Heart right ventricle (tissue), 16 donors: ENCODE measurements at regions of chr3 and their contacts with region 1.

Region 1: GRCh38 chr3:72996473-72997333 is at the start of gene PPP4R2:
- DNase-seq: peak; percentile 88 to 91
- ATAC-seq: peak; percentile 96 to 98 (median 97)
- H3K4me3 ChIP-seq: peak within 1 kb of the TSS; percentile 85 to 97 (median 92)
- H3K27ac ChIP-seq: peak within 1 kb of the TSS; percentile 96 to 99 (median 98)
- H3K4me1 ChIP-seq: peaks cover 0 to 48% (median 41%) of the 10 kb centered on the region in 9 donors
- H3K27me3 ChIP-seq: no peaks in the 10 kb centered on the region
- CTCF ChIP-seq: peak in 2 of 9 donors; percentile 11 to 32
- total RNA-seq, gene PPP4R2: 43.1 to 75.4 (median 50.6) TPM

Region 2: DNA sequence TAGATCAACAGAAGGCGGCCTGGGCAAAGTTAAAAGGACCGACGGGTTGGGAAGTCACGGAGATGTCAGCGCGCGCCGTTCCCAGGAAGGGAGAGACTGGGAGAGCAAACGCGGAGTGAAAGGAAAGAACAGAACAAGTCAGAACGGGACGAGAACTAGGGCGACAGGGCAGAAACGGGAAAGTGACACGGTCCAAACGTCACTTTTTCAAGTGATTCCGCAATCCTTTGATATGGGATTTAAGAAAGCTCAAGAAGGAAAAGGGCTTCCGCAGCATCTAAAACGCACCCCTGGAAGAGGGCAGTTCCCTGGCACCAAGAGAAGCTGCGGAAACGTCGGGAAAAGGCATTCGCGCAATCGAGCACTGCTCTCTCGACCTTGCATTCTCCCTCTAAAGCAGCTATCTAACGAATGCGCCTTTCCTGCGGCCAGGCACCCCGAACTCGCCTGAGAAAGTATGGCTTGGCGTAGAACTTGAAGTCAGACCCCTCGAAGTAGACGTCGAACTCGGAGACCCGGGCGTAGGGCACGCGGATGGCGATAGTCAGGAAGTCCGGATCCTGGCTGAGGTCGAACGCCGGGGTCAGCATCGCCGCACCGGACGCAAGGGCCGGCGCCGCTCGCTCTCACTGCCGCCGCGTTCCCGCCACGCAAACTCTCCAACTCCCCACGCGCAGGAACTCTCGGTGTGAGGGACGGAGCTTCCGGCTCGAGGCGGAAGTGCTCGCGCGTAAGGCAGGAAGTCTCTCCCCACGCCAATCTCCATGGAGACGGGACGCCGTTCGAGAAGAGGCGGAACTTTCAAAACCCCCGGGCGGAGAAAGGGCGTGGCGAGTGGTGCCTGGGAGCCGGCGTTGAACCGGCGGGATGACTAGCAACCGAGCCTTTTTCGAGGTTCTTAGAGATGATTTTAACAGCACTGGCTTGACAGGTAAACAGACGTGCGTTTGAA is 148.7 kb before region 1 on chr3 and contains the start of gene SHQ1:
- intact Hi-C with region 1: loop called in 2 of 10 experiments (anchors 5 to 10 kb)
- DNase-seq: peak; percentile 96 to 97
- ATAC-seq: peak; percentile 97 to 99 (median 99)
- H3K4me3 ChIP-seq: peak within 1 kb of the TSS; percentile 51 to 97 (median 80)
- H3K27ac ChIP-seq: peak within 1 kb of the TSS in 9 of 10 donors; percentile 74 to 89 (median 81)
- H3K4me1 ChIP-seq: peaks cover 7 to 45% (median 24%) of the 10 kb centered on the region in 9 donors
- H3K27me3 ChIP-seq: no peaks in the 10 kb centered on the region
- CTCF ChIP-seq: no peak
- total RNA-seq, gene SHQ1: 13.9 to 24.0 (median 19.7) TPM

Region 3: DNA sequence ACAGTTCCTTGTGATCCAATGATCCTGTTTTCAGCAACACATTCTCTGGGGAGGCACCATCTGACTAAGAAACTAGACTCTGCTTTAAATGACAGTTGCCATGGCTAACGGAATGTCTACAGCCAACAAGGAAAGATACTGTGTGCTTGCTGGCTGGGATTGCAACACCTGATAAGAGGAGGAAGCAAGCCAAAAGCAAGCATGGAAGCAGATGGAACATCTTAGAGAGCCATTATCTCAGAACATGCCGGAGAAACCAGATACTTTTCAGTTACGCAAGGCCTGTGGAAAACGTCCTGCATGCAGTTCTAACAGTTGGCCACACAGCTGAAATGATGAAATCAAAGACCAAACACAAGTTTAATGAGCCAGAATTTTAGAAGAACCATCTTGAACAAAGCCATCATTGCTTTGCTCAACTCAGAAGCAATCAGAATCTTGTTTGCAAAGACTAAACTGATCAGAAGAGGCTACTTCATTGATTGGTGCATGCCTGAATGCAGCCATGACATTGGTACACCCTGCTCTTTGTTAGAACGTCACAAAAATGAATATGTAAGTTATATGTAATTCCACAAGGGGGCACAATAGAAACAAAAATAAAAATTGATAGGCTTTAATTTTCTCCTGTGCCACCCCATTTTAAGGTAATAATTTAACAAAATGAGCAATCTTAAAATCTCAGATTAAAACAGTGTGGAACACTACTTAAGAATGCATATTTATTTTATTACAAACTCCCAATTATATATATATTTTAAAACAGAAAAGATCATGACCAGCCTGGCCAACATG is 58.0 kb before region 1 on chr3:
- intact Hi-C with region 1: loop called in 4 of 10 experiments (anchors 2 to 10 kb)
- DNase-seq: peak in 1 of 2 donors; percentile 69
- ATAC-seq: peak; percentile 84 to 96 (median 91)
- H3K4me3 ChIP-seq: no peak overlapping the region
- H3K27ac ChIP-seq: peak overlapping the region in 8 of 10 donors; percentile 2 to 61 (median 30)
- H3K4me1 ChIP-seq: peaks cover 0 to 27% (median 9%) of the 10 kb centered on the region in 9 donors
- H3K27me3 ChIP-seq: no peaks in the 10 kb centered on the region
- CTCF ChIP-seq: peak; percentile 34 to 77 (median 59)

Region 4: DNA sequence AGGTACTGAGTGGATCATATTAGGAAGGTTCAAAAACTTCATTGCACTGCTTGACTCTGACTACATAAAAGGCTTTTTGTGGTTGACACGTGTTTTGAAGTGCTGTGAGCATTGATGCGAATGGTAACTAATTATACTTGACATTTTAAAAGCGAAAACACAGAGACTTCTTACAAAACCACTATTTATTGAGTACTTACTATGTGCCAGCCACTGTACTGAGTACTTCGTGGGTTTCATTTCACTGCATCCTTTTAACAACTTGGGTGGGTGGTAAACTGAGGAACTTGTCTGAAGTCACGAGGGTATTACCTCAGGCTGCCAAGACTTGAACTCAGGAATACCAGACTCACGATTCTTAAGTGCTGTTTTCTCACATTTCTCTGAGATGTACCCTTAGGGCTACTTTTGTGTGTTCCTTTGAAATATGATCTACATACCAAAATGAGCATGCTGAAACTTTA is 45.4 kb before region 1 on chr3:
- intact Hi-C with region 1: loop called in 2 of 10 experiments (anchors 5 to 10 kb)
- DNase-seq: no peak
- ATAC-seq: no peak
- H3K4me3 ChIP-seq: no peak overlapping the region
- H3K27ac ChIP-seq: no peak overlapping the region
- H3K4me1 ChIP-seq: no peaks in the 10 kb centered on the region
- H3K27me3 ChIP-seq: no peaks in the 10 kb centered on the region
- CTCF ChIP-seq: no peak

Region 5: DNA sequence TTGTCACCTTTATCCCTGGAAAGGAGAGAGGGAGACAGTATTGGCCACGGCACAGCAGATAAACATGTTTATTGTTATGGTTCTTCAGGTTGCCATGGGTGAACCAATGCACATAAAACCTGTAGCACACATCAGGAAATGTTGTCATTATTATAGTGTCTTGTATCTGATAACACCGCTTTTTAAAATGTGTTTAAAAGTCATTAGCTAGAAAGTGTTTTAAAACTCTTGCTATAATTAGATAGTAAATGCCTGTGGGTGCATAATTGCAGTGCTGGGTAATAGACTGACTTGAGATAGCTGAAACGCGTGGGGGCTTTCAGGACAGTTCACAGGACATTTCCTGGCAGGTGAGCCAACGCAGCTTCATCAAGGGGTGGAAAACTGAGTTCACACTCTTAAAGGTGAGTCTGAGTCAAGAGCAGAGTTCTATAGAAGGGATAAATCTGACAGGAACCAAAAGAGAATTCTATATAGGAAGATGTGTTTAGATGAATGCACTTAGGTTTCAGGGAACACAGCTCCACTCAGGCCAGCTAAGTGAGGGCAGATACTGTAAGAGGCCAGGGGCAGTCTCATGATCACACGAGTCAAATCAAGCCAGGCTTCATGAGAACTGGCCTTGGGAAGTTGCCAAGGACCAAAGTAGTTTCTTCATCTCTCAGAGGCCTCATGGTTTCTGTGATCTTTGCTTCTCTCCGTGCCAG is 35.7 kb before region 1 on chr3:
- intact Hi-C with region 1: loop called in 2 of 10 experiments (anchors 5 kb)
- DNase-seq: peak; percentile 14 to 77
- ATAC-seq: peak; percentile 86 to 93 (median 88)
- H3K4me3 ChIP-seq: no peak overlapping the region
- H3K27ac ChIP-seq: peak overlapping the region; percentile 62 to 88 (median 76)
- H3K4me1 ChIP-seq: peaks cover 0 to 46% (median 26%) of the 10 kb centered on the region in 9 donors
- H3K27me3 ChIP-seq: no peaks in the 10 kb centered on the region
- CTCF ChIP-seq: no peak

Region 6: DNA sequence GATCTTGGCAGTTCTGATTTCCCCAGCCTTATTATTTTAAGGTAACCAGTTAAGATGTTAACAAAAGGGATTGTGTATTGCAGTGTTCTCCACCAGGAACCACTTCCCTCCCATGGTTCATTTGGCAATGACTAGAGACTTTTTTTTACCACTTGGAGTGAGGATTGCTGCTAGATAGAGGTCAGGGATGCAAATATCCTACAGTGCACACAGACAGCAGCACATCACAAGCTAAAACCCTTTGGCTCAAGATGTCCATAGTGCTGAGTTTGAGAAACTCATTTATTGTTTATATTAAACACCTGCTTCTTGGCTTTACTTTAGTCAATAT is 40.6 kb after region 1 on chr3:
- intact Hi-C with region 1: loop called in 3 of 10 experiments (anchors 5 kb)
- DNase-seq: no peak
- ATAC-seq: peak in 3 of 8 donors; percentile 43 to 48 (median 46)
- H3K4me3 ChIP-seq: no peak overlapping the region
- H3K27ac ChIP-seq: peak overlapping the region in 1 of 10 donors; percentile 50
- H3K4me1 ChIP-seq: peaks cover 0 to 97% (median 70%) of the 10 kb centered on the region in 9 donors
- H3K27me3 ChIP-seq: no peaks in the 10 kb centered on the region
- CTCF ChIP-seq: no peak

Region 7: GRCh38 chr3:73056014-73056844 is 59.5 kb after region 1 on chr3:
- intact Hi-C with region 1: loop called in 6 of 10 experiments (anchors 2 to 10 kb)
- DNase-seq: no peak
- ATAC-seq: peak in 4 of 8 donors; percentile 55 to 82 (median 58)
- H3K4me3 ChIP-seq: no peak overlapping the region
- H3K27ac ChIP-seq: peak overlapping the region in 3 of 10 donors; percentile 23 to 33 (median 26)
- H3K4me1 ChIP-seq: peaks cover 0 to 43% (median 17%) of the 10 kb centered on the region in 9 donors
- H3K27me3 ChIP-seq: no peaks in the 10 kb centered on the region
- CTCF ChIP-seq: peak; percentile 29 to 70 (median 55)